Activated CD4-positive, alpha-beta memory T cell treated with anti-CD3 and anti-CD28 coated beads, Interleukin-2, amount 10 ng/mL, durations not matched to agents 7 days and 5 days (primary cell): ENCODE measurements at regions of chr17 and their contacts with region 1.

Region 1: GRCh38 chr17:78360371-78361224 is 721 bp upstream of the SOCS3 start:
- DNase-seq: peak; percentile 92
- H3K4me3 Mint-ChIP-seq: peak overlapping the region; percentile 83
- H3K27ac Mint-ChIP-seq: peak overlapping the region; percentile 93
- H3K4me1 Mint-ChIP-seq: peaks cover 46% of the 10 kb centered on the region
- H3K27me3 Mint-ChIP-seq: peaks cover 4% of the 10 kb centered on the region

Region 2: DNA sequence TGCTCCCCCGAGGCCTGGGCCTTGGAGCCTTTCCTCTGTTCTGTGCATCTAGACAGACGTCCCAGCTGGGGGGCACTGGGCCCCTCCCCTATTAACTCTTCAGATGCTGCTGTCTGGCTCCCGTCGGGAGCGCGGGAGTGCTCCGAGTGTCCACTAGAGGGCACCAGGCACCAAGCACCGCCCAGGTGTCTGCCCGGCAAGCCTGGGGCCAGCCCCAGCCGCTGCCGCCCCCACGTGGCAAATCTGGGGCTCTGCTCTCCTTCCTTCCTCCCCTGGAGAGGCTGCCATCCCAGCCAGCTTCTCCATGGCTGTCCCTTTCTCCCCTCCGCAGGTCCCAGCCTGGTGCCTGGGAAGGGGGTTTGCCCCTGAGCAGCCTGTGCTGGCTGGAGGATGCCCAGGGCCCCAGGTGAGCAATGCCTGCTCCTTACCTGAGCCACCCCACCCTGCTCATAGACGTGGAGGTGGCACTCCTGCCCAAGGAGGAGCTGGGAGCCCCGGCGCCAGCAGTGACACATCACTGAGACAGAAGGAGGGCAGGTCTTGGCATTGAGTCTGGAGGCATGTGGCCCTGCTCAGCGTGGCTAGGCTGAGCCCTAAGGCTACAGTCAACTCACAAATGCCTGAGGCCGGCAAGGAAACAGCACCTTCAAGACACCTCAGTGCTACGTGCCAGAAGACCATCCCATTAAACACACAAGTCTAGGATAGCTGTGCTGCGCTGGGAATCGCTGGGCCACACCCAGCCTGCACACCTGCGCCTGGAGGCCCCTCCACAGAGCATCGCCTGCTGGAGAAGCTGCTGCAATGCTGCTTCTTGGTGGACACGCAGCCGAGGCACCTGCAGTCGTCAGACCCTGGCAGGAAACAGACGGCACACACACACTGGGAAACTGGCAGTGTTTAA is 109.5 kb before region 1 on chr17:
- CTCF ChIA-PET with region 1: interaction called, 15 read pairs
- POLR2A ChIA-PET with region 1: interaction called, 9 read pairs
- DNase-seq: peak; percentile 89
- H3K4me3 Mint-ChIP-seq: peak overlapping the region; percentile 75
- H3K27ac Mint-ChIP-seq: peak overlapping the region; percentile 79
- H3K4me1 Mint-ChIP-seq: peaks cover 48% of the 10 kb centered on the region
- H3K27me3 Mint-ChIP-seq: peaks cover 4% of the 10 kb centered on the region

Region 3: DNA sequence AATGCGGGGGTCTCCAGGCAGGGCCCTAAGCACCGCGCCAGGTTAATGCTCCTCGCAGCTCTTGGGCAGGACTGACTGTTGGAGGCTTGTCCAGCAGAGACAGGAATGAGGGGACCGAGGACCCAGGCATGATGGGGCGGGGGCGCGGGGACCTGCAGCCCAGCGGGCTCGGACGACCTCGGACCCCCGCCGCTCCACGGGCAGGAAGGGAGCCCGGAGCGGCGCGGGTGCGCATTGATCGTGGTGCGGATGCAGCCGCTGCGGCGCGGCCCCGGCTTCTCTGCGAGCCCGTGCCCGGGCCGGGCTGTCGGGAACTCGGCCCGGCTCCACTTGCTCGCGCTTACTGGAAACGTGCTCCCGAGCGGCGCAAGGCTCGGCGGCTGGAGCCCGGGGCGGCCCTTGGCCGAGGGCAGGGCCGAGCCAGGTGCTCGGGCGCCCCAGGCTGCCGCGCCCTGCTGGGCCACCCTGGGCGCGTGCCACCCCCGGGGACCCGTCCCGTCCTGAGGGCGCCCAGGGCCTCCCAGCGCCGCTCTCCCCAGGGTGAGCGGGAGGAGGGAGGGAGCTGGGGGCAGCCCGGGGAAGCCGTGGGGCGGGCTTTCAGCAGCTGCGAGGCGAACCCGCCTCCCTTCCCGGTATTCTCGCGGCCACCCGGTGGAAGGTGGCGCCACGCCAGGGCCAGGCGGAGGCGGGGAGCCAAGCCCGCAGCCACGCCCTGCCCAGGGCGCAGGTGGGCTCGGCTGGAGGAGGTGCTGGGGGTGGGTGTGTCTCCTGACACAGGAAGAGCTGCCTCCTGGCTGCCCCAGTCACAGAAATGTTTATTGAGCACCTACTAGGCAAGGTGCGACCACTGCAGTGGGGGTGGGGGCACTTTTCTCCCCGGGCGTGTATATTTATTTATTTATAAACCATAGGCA is 46.6 kb before region 1 on chr17:
- CTCF ChIA-PET with region 1: interaction called, 5 read pairs
- POLR2A ChIA-PET with region 1: interaction called, 68 read pairs
- DNase-seq: peak; percentile 74
- H3K4me3 Mint-ChIP-seq: peak overlapping the region; percentile 50
- H3K27ac Mint-ChIP-seq: peak overlapping the region; percentile 26
- H3K4me1 Mint-ChIP-seq: peaks cover 46% of the 10 kb centered on the region
- H3K27me3 Mint-ChIP-seq: peaks cover 27% of the 10 kb centered on the region

Region 4: GRCh38 chr17:78341559-78342448 is 18.8 kb before region 1 on chr17:
- CTCF ChIA-PET with region 1: interaction called, 42 read pairs
- POLR2A ChIA-PET with region 1: interaction called, 153 read pairs
- DNase-seq: no peak
- H3K4me3 Mint-ChIP-seq: peak overlapping the region; percentile 17
- H3K27ac Mint-ChIP-seq: no peak overlapping the region
- H3K4me1 Mint-ChIP-seq: peaks cover 76% of the 10 kb centered on the region
- H3K27me3 Mint-ChIP-seq: peaks cover 2% of the 10 kb centered on the region

Region 5: DNA sequence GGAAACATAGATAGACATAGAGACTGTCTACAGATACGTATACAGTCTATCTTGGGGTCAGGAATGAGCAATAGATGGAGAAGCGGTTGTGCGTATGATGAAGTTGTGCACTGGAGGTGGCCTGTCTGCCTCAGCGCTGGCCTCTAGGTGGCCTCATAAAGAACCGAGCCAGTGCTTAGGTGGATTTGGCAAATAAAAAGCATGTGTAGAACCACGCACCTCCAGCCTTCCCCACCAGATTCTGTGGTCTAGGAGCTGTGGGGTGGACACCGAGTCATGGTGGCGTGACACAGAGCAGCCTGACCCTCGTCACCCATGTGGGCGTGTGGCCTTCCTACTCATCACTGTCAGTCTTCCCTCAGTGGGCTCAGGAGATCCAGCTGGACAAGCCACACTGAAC is 51.8 kb after region 1 on chr17:
- CTCF ChIA-PET with region 1: interaction called, 6 read pairs
- POLR2A ChIA-PET with region 1: interaction called, 12 read pairs
- DNase-seq: peak; percentile 63
- H3K4me3 Mint-ChIP-seq: peak overlapping the region; percentile 83
- H3K27ac Mint-ChIP-seq: peak overlapping the region; percentile 96
- H3K4me1 Mint-ChIP-seq: peaks cover 93% of the 10 kb centered on the region
- H3K27me3 Mint-ChIP-seq: no peaks in the 10 kb centered on the region

Region 6: GRCh38 chr17:78697554-78698343 is 337.2 kb after region 1 on chr17:
- CTCF ChIA-PET with region 1: no interaction called
- POLR2A ChIA-PET with region 1: no interaction called
- DNase-seq: no peak
- H3K4me3 Mint-ChIP-seq: no peak overlapping the region
- H3K27ac Mint-ChIP-seq: peak overlapping the region; percentile 44
- H3K4me1 Mint-ChIP-seq: peaks cover 10% of the 10 kb centered on the region
- H3K27me3 Mint-ChIP-seq: no peaks in the 10 kb centered on the region